Calu3 (cell line): ENCODE measurements at regions of chr4 and their contacts with region 1.

Region 1: GRCh38 chr4:11471618-11472017 is 42.9 kb upstream of the HS3ST1 start:
- DNase-seq: peak; percentile 27
- H3K4me3 Mint-ChIP-seq: peak overlapping the region; percentile 51
- H3K27ac Mint-ChIP-seq: peak overlapping the region; percentile 75
- H3K4me1 Mint-ChIP-seq: peaks cover 63% of the 10 kb centered on the region
- H3K27me3 Mint-ChIP-seq: no peaks in the 10 kb centered on the region
- CTCF ChIP-seq: no peak

Region 2: DNA sequence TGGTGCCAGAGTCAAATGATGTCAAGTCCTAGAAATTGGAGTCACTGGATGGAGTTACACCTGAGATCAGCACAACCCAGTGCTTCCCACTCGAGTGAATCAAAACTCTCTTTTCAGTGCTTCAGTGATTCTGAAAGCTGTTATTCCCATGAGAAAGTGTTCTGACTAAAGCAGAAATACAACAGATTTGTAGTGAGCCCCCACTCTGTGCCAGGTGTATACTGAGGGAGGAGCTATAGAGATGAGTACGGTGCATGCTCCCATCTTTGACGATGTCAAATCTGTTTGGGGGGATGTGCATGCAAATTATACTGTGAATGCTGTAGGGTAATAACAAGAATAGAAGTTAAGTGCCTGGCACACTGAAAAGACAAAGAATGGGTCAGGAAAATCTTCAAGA is 373.2 kb before region 1 on chr4:
- CTCF ChIA-PET with region 1: no interaction called
- intact Hi-C with region 1: no loop called
- DNase-seq: no peak
- H3K4me3 Mint-ChIP-seq: no peak overlapping the region
- H3K27ac Mint-ChIP-seq: no peak overlapping the region
- H3K4me1 Mint-ChIP-seq: no peaks in the 10 kb centered on the region
- H3K27me3 Mint-ChIP-seq: peaks cover 8% of the 10 kb centered on the region
- CTCF ChIP-seq: no peak

Region 3: GRCh38 chr4:11456436-11456835 is 15.2 kb before region 1 on chr4:
- CTCF ChIA-PET with region 1: no interaction called
- intact Hi-C with region 1: loop called (anchors 1 kb)
- DNase-seq: no peak
- H3K4me3 Mint-ChIP-seq: no peak overlapping the region
- H3K27ac Mint-ChIP-seq: no peak overlapping the region
- H3K4me1 Mint-ChIP-seq: peaks cover 13% of the 10 kb centered on the region
- H3K27me3 Mint-ChIP-seq: no peaks in the 10 kb centered on the region
- CTCF ChIP-seq: no peak

Region 4: DNA sequence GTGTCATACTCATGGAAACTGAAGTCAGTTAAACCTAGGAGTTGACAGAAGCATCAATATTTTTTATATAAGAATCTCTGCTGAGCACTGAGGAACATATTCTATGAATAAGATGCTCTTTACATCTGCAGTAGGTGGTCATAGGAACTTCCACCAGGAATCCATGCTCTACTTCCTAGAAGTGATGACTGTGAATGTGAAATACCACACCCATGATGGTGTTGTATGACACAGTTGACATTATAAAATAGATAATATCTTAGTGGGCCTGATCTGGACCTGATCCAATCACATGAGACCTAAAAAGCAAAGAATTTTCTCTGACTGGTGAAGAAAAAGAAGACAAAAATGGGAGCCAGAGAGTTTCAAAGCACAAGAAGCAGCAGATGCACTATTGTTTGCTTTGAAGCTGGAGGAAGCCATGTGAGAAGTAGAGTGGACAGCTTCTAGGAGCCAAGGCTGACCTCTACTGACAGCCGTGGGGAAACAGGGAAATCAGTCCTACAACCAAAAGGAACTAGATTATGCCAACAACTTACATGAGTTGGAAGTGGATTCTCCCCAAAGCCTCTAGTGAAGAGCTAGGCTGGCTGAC is 25.7 kb after region 1 on chr4:
- CTCF ChIA-PET with region 1: interaction called, 4 read pairs
- intact Hi-C with region 1: loop called (anchors 2 kb)
- DNase-seq: peak; percentile 42
- H3K4me3 Mint-ChIP-seq: no peak overlapping the region
- H3K27ac Mint-ChIP-seq: peak overlapping the region; percentile 93
- H3K4me1 Mint-ChIP-seq: peaks cover 55% of the 10 kb centered on the region
- H3K27me3 Mint-ChIP-seq: no peaks in the 10 kb centered on the region
- CTCF ChIP-seq: no peak